A673 (cell line): ENCODE measurements at regions of chr11 and their contacts with region 1.

Region 1: GRCh38 chr11:117098269-117099232 is at the start of gene SIK3:
- DNase-seq: peak; percentile 97
- H3K4me3 ChIP-seq: peak within 1 kb of the TSS; percentile 72
- H3K27ac ChIP-seq: peak within 1 kb of the TSS; percentile 98
- H3K4me1 ChIP-seq: peaks cover 36% of the 10 kb centered on the region
- H3K27me3 ChIP-seq: no peaks in the 10 kb centered on the region
- CTCF ChIP-seq: peak; percentile 51
- total RNA-seq, gene SIK3: 71.9 and 81.7 TPM in 2 replicates

Region 2: GRCh38 chr11:116879800-116880625 is 218.5 kb before region 1 on chr11:
- CTCF ChIA-PET with region 1: interaction called, 3 read pairs
- POLR2A ChIA-PET with region 1: no interaction called
- intact Hi-C with region 1: loop called (anchors 2 kb)
- DNase-seq: peak; percentile 84
- H3K4me3 ChIP-seq: no peak overlapping the region
- H3K27ac ChIP-seq: no peak overlapping the region
- H3K4me1 ChIP-seq: peaks cover 7% of the 10 kb centered on the region
- H3K27me3 ChIP-seq: no peaks in the 10 kb centered on the region
- CTCF ChIP-seq: peak; percentile 85

Region 3: DNA sequence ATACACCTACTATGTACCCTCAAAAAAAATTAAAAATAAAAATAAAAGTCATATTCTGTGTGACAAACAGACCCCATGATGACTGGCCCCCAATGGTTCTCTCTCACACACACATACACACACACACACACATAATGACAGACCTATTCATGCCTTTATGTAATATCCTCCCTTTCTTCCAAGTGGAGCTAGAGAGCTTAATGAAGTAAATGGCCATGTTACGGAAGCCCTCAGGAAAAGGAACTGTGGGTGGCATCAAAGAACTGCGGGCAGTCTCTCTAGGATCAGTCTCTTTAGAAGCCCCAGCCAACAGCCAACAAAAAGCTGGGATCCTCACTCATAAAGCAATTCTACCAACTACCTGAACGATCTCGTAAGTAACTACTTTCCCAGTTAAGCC is 125.9 kb before region 1 on chr11:
- CTCF ChIA-PET with region 1: interaction called, 11 read pairs
- POLR2A ChIA-PET with region 1: no interaction called
- intact Hi-C with region 1: loop called (anchors 5 kb)
- DNase-seq: peak; percentile 95
- H3K4me3 ChIP-seq: no peak overlapping the region
- H3K27ac ChIP-seq: peak overlapping the region; percentile 25
- H3K4me1 ChIP-seq: peaks cover 31% of the 10 kb centered on the region
- H3K27me3 ChIP-seq: no peaks in the 10 kb centered on the region
- CTCF ChIP-seq: peak; percentile 67

Region 4: DNA sequence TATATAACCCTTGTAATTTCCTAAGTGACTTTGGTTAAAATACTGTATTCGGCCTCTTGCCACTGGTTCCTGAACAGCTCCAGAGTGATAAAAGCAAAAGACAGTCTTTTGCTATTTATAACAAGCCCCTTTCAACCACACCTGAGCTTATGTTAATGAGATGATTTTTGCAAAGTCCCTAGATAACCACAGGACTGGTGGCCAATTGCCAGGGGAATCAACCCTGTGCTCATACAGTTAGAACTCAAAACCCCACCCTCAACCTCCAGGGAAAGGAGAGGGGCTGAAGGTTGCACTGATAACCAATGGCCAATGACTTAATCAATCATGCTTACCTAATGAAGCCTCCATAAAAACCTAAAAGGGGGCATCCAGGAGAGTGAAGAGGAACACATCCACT is 78.3 kb before region 1 on chr11:
- CTCF ChIA-PET with region 1: no interaction called
- POLR2A ChIA-PET with region 1: no interaction called
- intact Hi-C with region 1: loop called (anchors 2 kb)
- DNase-seq: no peak
- H3K4me3 ChIP-seq: no peak overlapping the region
- H3K27ac ChIP-seq: peak overlapping the region; percentile 25
- H3K4me1 ChIP-seq: peaks cover 65% of the 10 kb centered on the region
- H3K27me3 ChIP-seq: no peaks in the 10 kb centered on the region
- CTCF ChIP-seq: no peak

Region 5: GRCh38 chr11:117064275-117064674 is 34.3 kb before region 1 on chr11:
- CTCF ChIA-PET with region 1: no interaction called
- POLR2A ChIA-PET with region 1: no interaction called
- intact Hi-C with region 1: no loop called
- DNase-seq: no peak
- H3K4me3 ChIP-seq: no peak overlapping the region
- H3K27ac ChIP-seq: peak overlapping the region; percentile 28
- H3K4me1 ChIP-seq: peaks cover 33% of the 10 kb centered on the region
- H3K27me3 ChIP-seq: no peaks in the 10 kb centered on the region
- CTCF ChIP-seq: no peak